ENCODE measurements at regions of chr4 and their contacts with region 1.

Region 1: GRCh38 chr4:51853027-51853682 is 10.2 kb downstream of the DCUN1D4 start:
- DNase-seq: no peak
- ATAC-seq: no peak
- H3K4me3 ChIP-seq: no peak overlapping the region
- H3K4me3 Mint-ChIP-seq: no peak overlapping the region
- H3K27ac ChIP-seq: no peak overlapping the region
- H3K27ac Mint-ChIP-seq: no peak overlapping the region
- H3K4me1 ChIP-seq: peaks cover 4% of the 10 kb centered on the region
- H3K4me1 Mint-ChIP-seq: peaks cover 63% of the 10 kb centered on the region
- H3K27me3 ChIP-seq: no peaks in the 10 kb centered on the region
- H3K27me3 Mint-ChIP-seq: no peaks in the 10 kb centered on the region
- CTCF ChIP-seq: no peak

Region 2: DNA sequence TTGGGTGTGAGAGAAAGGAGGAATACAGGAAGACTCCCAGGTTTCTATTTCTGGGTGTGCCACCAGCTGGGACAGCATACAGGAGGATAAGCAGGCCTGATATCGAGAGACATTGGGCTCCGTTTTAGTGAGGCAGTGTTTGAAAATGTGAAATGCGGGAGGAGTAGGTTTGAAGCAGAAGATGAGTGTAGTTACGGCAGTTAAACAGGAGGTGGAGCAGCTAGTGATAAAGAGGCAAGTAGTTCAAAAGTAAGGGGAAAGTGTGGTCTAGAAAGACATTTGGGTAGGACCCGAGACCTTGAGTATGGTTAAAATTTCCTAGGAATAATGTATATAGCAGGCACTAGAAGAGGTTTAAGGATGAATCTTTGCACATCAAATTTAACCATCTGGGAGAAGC is 32.2 kb after region 1 on chr4:
- CTCF ChIA-PET with region 1: no interaction called
- POLR2A ChIA-PET with region 1: no interaction called
- intact Hi-C with region 1: loop called in 1 of 2 experiments (anchors 5 kb)
- DNase-seq: peak in 1 of 9 experiments; percentile 17
- ATAC-seq: no peak
- H3K4me3 ChIP-seq: no peak overlapping the region
- H3K4me3 Mint-ChIP-seq: no peak overlapping the region
- H3K27ac ChIP-seq: no peak overlapping the region
- H3K27ac Mint-ChIP-seq: no peak overlapping the region
- H3K4me1 ChIP-seq: no peaks in the 10 kb centered on the region
- H3K4me1 Mint-ChIP-seq: peaks cover 4% of the 10 kb centered on the region
- H3K27me3 ChIP-seq: no peaks in the 10 kb centered on the region
- H3K27me3 Mint-ChIP-seq: no peaks in the 10 kb centered on the region
- CTCF ChIP-seq: peak; percentile 23

Region 3: DNA sequence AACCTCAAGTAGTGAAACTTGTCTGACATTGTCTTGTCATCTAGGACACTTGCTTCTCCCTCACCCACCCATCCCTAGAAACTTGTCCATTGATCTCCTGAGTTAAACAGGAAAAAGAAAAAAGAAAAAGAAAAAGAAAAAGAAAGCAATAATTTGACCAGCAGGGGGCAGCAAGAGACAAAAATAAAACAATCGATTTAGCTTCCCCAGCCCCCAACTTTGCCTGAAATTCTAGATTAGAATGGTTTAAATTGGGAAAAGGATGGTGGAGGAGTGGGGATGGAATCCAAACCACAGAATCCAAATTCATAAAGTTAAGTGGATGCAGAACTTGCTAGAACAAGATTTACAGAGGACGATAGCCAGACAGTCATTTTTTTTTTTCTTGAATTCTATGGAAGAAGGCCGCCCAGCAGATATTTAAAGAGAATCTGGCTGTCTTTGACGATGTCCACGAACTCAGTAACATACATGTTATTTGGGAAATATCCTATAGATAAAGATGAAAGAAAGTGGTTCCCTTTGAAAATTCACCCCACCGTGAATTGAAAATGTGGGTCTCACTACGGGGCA is 523.1 kb after region 1 on chr4:
- CTCF ChIA-PET with region 1: no interaction called
- POLR2A ChIA-PET with region 1: no interaction called
- intact Hi-C with region 1: no loop called
- DNase-seq: peak in 2 of 9 experiments; percentile 33 to 39
- ATAC-seq: no peak
- H3K4me3 ChIP-seq: no peak overlapping the region
- H3K4me3 Mint-ChIP-seq: no peak overlapping the region
- H3K27ac ChIP-seq: no peak overlapping the region
- H3K27ac Mint-ChIP-seq: no peak overlapping the region
- H3K4me1 ChIP-seq: no peaks in the 10 kb centered on the region
- H3K4me1 Mint-ChIP-seq: no peaks in the 10 kb centered on the region
- H3K27me3 ChIP-seq: no peaks in the 10 kb centered on the region
- H3K27me3 Mint-ChIP-seq: peaks cover 7% of the 10 kb centered on the region
- CTCF ChIP-seq: peak; percentile 71